Activated CD4-positive, alpha-beta T cell treated with anti-CD3 and anti-CD28 coated beads for 36 hours (primary cell): ENCODE measurements at regions of chr19 and their contacts with region 1.

Region 1: GRCh38 chr19:46661020-46661731 is at the start of gene DACT3:
- DNase-seq: peak; percentile 100
- ATAC-seq: peak; percentile 87
- H3K4me3 Mint-ChIP-seq: peak within 1 kb of the TSS; percentile 66
- H3K27ac Mint-ChIP-seq: peak within 1 kb of the TSS; percentile 62
- H3K4me1 Mint-ChIP-seq: peaks cover 28% of the 10 kb centered on the region
- H3K27me3 Mint-ChIP-seq: peaks cover 12% of the 10 kb centered on the region
- total RNA-seq, gene DACT3: 2.9 to 3.1 TPM

Region 2: GRCh38 chr19:46426506-46427162 is 234.5 kb before region 1 on chr19:
- CTCF ChIA-PET with region 1: no interaction called
- POLR2A ChIA-PET with region 1: no interaction called
- intact Hi-C with region 1: no loop called
- DNase-seq: peak; percentile 76
- ATAC-seq: peak; percentile 79
- H3K4me3 Mint-ChIP-seq: peak overlapping the region; percentile 57
- H3K27ac Mint-ChIP-seq: no peak overlapping the region
- H3K4me1 Mint-ChIP-seq: peaks cover 27% of the 10 kb centered on the region
- H3K27me3 Mint-ChIP-seq: peaks cover 73% of the 10 kb centered on the region

Region 3: DNA sequence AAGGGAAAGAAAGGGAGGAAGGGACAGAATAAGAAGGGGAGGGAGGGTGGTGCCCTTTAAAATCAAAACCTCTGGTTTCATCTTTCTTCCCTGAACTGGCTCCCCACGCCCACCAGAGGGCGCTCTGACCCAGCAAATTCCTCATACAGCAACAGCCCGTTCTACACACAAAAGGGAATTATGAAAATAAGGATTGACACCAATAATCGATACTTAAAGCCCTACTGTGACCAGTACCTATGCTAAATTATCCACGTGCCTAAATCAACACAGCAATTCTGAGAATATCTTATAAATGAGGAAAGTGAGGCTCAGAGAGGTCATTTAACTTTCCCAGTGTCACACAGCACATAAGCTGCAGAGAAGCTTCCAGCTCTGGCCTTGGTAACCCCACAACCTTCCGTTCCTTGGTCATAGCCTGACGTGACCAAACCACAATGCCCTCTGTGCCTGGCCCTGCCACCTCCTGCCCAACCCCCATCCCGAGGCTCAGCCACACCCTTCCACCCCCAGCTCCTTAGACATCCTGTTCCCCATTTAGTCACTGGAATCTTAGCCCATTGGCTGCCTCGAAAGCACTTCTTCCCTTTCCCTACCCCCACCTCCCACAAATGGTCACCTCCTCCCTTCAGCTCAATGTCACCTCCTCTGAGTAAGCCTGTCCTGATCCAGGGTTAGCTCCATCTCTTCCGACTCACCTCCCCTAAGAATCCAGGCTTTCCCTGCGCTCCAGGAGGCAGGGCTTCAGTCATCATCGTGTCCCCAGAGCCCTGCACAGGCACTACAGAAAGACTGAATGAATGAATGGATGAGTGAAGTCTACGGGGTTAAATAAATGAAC is 131.3 kb before region 1 on chr19:
- CTCF ChIA-PET with region 1: interaction called, 22 read pairs
- POLR2A ChIA-PET with region 1: no interaction called
- intact Hi-C with region 1: loop called (anchors 1 kb)
- DNase-seq: peak; percentile 86
- ATAC-seq: peak; percentile 75
- H3K4me3 Mint-ChIP-seq: no peak overlapping the region
- H3K27ac Mint-ChIP-seq: peak overlapping the region; percentile 74
- H3K4me1 Mint-ChIP-seq: peaks cover 24% of the 10 kb centered on the region
- H3K27me3 Mint-ChIP-seq: no peaks in the 10 kb centered on the region

Region 4: GRCh38 chr19:46614114-46614722 is 47.0 kb before region 1 on chr19:
- CTCF ChIA-PET with region 1: interaction called, 206 read pairs
- POLR2A ChIA-PET with region 1: interaction called, 14 read pairs
- intact Hi-C with region 1: loop called (anchors 1 kb)
- DNase-seq: peak; percentile 92
- ATAC-seq: peak; percentile 49
- H3K4me3 Mint-ChIP-seq: no peak overlapping the region
- H3K27ac Mint-ChIP-seq: peak overlapping the region; percentile 62
- H3K4me1 Mint-ChIP-seq: peaks cover 82% of the 10 kb centered on the region
- H3K27me3 Mint-ChIP-seq: no peaks in the 10 kb centered on the region

Region 5: GRCh38 chr19:46678110-46678732 is 17.0 kb after region 1 on chr19:
- CTCF ChIA-PET with region 1: interaction called, 6 read pairs
- POLR2A ChIA-PET with region 1: no interaction called
- intact Hi-C with region 1: loop called in 1 of 2 experiments (anchors 1 kb)
- DNase-seq: peak; percentile 83
- ATAC-seq: peak; percentile 95
- H3K4me3 Mint-ChIP-seq: no peak overlapping the region
- H3K27ac Mint-ChIP-seq: peak overlapping the region; percentile 73
- H3K4me1 Mint-ChIP-seq: peaks cover 15% of the 10 kb centered on the region
- H3K27me3 Mint-ChIP-seq: no peaks in the 10 kb centered on the region

Region 6: GRCh38 chr19:46860125-46860845 is 199.1 kb after region 1 on chr19:
- CTCF ChIA-PET with region 1: no interaction called
- POLR2A ChIA-PET with region 1: no interaction called
- intact Hi-C with region 1: loop called in 1 of 2 experiments (anchors 1 kb)
- DNase-seq: peak; percentile 99
- ATAC-seq: peak; percentile 82
- H3K4me3 Mint-ChIP-seq: no peak overlapping the region
- H3K27ac Mint-ChIP-seq: peak overlapping the region; percentile 78
- H3K4me1 Mint-ChIP-seq: peaks cover 25% of the 10 kb centered on the region
- H3K27me3 Mint-ChIP-seq: no peaks in the 10 kb centered on the region

Region 7: DNA sequence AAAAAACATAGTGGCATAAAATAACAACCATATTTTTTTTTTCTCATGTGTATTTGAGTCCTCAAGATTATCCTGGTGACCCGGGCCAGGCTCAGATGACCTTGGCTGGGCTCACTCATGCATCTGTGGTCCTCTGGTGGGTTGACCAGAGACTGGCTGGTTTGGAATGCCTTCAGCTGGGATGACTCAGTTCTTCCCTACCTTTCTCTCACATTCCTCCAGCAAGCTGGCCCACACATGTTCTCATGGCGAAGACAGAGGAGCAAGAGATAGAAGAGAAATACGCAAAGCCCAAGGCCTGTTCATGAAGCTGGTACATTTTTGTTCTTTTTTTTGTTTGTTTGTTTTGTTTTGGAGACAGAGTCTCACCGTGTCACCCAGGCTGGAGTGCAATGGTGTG is 926.1 kb after region 1 on chr19:
- CTCF ChIA-PET with region 1: no interaction called
- POLR2A ChIA-PET with region 1: no interaction called
- intact Hi-C with region 1: no loop called
- DNase-seq: no peak
- ATAC-seq: no peak
- H3K4me3 Mint-ChIP-seq: no peak overlapping the region
- H3K27ac Mint-ChIP-seq: no peak overlapping the region
- H3K4me1 Mint-ChIP-seq: peaks cover 4% of the 10 kb centered on the region
- H3K27me3 Mint-ChIP-seq: no peaks in the 10 kb centered on the region